Calu3 (cell line): ENCODE measurements at regions of chr4 and their contacts with region 1.

Region 1: GRCh38 chr4:170047771-170048354 is 21.7 kb upstream of the MFAP3L start:
- DNase-seq: peak; percentile 44
- H3K4me3 Mint-ChIP-seq: no peak overlapping the region
- H3K27ac Mint-ChIP-seq: no peak overlapping the region
- H3K4me1 Mint-ChIP-seq: no peaks in the 10 kb centered on the region
- H3K27me3 Mint-ChIP-seq: no peaks in the 10 kb centered on the region
- CTCF ChIP-seq: no peak

Region 2: DNA sequence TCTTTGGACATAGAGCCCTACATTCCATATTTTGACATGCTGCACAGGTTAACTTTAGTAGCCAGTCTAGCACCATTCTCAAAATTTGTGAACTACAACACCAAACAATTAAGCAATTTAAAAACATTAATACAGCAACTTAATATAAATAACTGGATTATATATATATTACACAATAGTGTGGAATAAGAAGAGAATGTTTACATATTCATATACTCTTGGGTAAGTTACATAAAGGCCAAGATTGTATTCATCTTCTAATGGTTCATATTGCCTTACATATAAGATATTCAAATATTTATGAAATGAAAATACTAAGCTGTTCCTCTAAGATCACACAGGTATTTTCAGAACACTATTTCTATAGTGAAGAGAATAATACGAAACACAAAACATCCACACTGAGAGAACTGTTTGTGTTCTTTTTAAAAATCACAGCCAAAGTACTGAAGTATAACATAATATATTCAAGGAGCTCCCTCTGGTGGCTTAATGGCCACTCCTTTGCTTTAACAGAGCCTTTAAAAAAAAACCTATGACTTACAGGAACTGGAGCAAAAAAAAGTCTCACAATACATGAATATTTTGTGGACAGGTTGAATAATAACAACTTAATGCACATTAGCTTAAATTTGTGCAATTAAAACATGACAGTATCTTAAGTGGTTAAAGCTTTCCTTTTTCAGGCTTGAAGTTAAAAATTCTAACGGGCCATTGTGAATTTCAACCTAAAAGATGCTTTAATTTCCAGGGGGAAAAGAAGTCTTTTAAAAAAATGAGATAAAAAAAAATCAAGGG is 481.6 kb before region 1 on chr4:
- CTCF ChIA-PET with region 1: no interaction called
- intact Hi-C with region 1: loop called (anchors 5 kb)
- DNase-seq: peak; percentile 25
- H3K4me3 Mint-ChIP-seq: no peak overlapping the region
- H3K27ac Mint-ChIP-seq: no peak overlapping the region
- H3K4me1 Mint-ChIP-seq: no peaks in the 10 kb centered on the region
- H3K27me3 Mint-ChIP-seq: no peaks in the 10 kb centered on the region
- CTCF ChIP-seq: peak; percentile 23

Region 3: GRCh38 chr4:169612871-169613859 is 434.7 kb before region 1 on chr4:
- CTCF ChIA-PET with region 1: interaction called, 3 read pairs
- intact Hi-C with region 1: loop called (anchors 5 kb)
- DNase-seq: peak; percentile 61
- H3K4me3 Mint-ChIP-seq: peak overlapping the region; percentile 94
- H3K27ac Mint-ChIP-seq: peak overlapping the region; percentile 95
- H3K4me1 Mint-ChIP-seq: peaks cover 7% of the 10 kb centered on the region
- H3K27me3 Mint-ChIP-seq: no peaks in the 10 kb centered on the region
- CTCF ChIP-seq: peak; percentile 29

Region 4: DNA sequence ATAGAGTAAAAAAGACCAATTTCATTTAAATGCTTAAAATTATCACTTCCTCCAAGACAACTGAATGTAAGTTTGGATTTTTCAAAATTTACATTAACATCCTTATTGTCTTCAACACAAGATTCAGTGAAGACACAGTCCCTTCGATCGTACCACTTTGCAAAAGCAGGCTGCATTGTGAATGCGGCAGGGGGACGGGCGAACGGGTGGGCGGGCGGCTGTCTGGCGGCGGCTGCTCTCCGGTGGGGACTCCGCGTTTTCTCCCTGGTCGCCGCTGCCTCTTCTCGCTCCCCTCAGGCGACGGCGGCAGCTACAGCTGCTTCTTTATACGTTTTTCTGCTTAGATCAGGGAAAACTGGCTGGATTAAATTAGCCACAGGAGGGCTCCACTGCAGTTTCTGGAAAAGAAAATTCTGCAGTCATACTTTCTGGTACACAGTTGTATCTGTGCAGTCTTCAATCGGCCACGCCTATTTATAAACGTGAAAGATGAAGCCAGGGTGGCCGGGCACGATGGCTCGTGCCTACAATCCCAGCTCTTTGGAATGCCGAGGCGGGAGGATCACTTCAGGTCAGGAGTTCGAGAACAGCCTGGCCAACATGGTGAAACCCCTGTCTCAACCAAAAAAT is 256.2 kb before region 1 on chr4:
- CTCF ChIA-PET with region 1: no interaction called
- intact Hi-C with region 1: loop called (anchors 2 kb)
- DNase-seq: peak; percentile 59
- H3K4me3 Mint-ChIP-seq: peak overlapping the region; percentile 68
- H3K27ac Mint-ChIP-seq: no peak overlapping the region
- H3K4me1 Mint-ChIP-seq: peaks cover 12% of the 10 kb centered on the region
- H3K27me3 Mint-ChIP-seq: peaks cover 52% of the 10 kb centered on the region
- CTCF ChIP-seq: peak; percentile 23